ENCODE measurements at regions of chr7 and their contacts with region 1.

Region 1: GRCh38 chr7:152759949-152760853 is 649 bp downstream of the ACTR3B start:
- DNase-seq: no peak
- H3K4me3 Mint-ChIP-seq: peak overlapping the region; percentile 81
- H3K27ac Mint-ChIP-seq: peak overlapping the region; percentile 54
- H3K4me1 Mint-ChIP-seq: peaks cover 13% of the 10 kb centered on the region
- H3K27me3 Mint-ChIP-seq: peaks cover 4% of the 10 kb centered on the region

Region 2: DNA sequence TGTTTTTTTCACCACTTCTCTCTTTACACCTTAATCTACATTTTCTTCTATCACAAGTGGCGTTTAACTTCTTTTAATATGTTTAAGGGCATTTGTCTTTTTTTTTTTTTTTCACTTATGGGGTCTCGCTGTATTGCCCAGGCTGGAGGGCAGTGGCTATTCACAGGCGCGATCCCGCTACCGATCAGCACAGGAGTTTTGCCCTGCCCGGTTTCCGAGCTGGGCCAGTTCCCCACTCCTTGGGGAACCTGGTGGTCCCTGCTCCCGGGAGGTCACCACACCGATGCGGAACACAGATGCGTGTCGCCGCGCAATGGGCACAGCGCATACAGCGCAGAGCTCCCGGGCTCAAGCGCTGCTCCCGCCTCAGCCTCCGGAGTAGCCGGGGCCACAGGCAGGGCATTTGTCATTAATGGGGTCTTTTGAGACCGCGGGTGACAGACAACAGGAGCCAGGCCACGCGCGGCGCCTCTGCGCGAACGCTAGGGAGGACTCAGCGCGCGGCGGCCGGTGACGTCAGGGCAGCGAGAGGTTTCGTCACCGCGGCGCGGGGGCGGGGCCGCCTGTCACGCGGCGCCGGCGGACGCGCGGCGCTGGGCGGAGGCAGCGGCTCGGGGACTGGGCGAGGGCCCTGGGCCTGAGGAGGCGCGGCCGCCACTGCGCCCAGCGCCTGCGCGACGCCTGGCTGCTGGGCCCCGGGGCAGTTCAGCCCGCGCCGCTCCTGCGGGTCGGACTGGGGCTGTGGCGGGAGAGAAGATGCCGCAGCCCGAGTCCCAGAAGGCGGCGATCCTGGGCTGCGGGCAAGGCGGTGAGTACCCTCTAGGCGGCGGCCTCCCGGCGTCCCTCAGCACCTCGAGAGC is 734.9 kb before region 1 on chr7 and contains the start of gene GALNT11:
- intact Hi-C with region 1: loop called (anchors 10 kb)
- DNase-seq: peak; percentile 97
- H3K4me3 Mint-ChIP-seq: peak within 1 kb of the TSS; percentile 88
- H3K27ac Mint-ChIP-seq: peak within 1 kb of the TSS; percentile 85
- H3K4me1 Mint-ChIP-seq: peaks cover 23% of the 10 kb centered on the region
- H3K27me3 Mint-ChIP-seq: peaks cover 16% of the 10 kb centered on the region
- total RNA-seq, gene GALNT11: 22.0 and 22.1 TPM in 2 replicates

Region 3: GRCh38 chr7:152967958-152968357 is 207.8 kb after region 1 on chr7:
- intact Hi-C with region 1: no loop called
- DNase-seq: no peak
- H3K4me3 Mint-ChIP-seq: no peak overlapping the region
- H3K27ac Mint-ChIP-seq: no peak overlapping the region
- H3K4me1 Mint-ChIP-seq: no peaks in the 10 kb centered on the region
- H3K27me3 Mint-ChIP-seq: no peaks in the 10 kb centered on the region

Measured in activated CD4-positive, alpha-beta T cell treated with anti-CD3 and anti-CD28 coated beads, Interleukin-2, amount 10 ng/mL, durations not matched to agents 24 days and 14 days (primary cell).